Activated naive CD4-positive, alpha-beta T cell treated with anti-CD3 and anti-CD28 coated beads for 36 hours (primary cell): ENCODE measurements at regions of chr10 and their contacts with region 1.

Region 1: GRCh38 chr10:79938728-79939406 is 10.0 kb downstream of the SFTPD start:
- DNase-seq: peak; percentile 36
- H3K4me3 Mint-ChIP-seq: no peak overlapping the region
- H3K27ac Mint-ChIP-seq: no peak overlapping the region
- H3K4me1 Mint-ChIP-seq: peaks cover 14% of the 10 kb centered on the region
- H3K27me3 Mint-ChIP-seq: peaks cover 3% of the 10 kb centered on the region

Region 2: DNA sequence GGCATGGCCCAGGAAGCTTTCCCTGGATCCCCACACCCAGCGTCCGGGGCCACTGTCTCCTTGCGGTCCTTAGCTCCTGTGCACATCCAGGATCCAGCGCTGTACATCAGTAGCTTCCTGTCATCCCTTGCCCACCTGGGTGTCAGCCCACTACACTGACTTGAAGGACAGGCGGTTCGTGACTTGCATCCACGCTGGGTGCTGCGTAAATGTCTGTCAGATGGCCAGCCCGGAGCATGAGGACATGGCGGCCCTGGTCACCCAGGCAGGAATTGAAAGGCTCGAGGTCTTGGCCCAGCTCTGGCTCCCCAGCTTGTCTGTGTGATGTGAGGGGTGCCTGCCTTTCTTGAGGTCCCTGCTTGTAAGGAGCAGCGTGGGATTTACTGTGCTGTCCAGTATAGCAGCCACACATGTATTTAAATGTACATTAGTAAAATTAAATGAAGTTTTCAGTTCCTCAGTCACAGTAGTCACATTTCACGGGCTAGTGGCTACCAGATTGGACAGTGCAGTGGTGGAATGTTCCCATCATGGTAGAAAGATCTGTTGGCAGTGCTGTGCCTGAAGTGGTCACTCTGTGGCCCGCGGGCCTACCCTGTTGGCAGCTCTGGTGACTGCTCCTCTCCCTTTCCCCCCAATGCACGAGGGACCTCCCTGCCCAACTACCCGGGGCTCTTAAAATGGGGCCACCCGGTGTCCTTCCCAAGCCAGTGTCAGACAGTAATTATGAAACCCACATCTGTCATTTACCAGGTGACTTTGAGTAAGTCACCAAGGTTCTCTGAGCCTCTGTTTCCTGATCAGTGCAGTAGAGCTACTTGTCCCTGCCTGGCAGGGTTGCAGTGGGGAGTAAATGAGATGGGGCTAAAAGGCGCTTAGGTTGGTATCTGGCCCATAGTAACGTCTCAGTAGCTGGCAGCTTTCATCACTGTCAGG is 689.4 kb before region 1 on chr10:
- CTCF ChIA-PET with region 1: no interaction called
- intact Hi-C with region 1: no loop called
- DNase-seq: peak; percentile 61
- H3K4me3 Mint-ChIP-seq: peak overlapping the region; percentile 37
- H3K27ac Mint-ChIP-seq: peak overlapping the region; percentile 73
- H3K4me1 Mint-ChIP-seq: peaks cover 50% of the 10 kb centered on the region
- H3K27me3 Mint-ChIP-seq: no peaks in the 10 kb centered on the region

Region 3: DNA sequence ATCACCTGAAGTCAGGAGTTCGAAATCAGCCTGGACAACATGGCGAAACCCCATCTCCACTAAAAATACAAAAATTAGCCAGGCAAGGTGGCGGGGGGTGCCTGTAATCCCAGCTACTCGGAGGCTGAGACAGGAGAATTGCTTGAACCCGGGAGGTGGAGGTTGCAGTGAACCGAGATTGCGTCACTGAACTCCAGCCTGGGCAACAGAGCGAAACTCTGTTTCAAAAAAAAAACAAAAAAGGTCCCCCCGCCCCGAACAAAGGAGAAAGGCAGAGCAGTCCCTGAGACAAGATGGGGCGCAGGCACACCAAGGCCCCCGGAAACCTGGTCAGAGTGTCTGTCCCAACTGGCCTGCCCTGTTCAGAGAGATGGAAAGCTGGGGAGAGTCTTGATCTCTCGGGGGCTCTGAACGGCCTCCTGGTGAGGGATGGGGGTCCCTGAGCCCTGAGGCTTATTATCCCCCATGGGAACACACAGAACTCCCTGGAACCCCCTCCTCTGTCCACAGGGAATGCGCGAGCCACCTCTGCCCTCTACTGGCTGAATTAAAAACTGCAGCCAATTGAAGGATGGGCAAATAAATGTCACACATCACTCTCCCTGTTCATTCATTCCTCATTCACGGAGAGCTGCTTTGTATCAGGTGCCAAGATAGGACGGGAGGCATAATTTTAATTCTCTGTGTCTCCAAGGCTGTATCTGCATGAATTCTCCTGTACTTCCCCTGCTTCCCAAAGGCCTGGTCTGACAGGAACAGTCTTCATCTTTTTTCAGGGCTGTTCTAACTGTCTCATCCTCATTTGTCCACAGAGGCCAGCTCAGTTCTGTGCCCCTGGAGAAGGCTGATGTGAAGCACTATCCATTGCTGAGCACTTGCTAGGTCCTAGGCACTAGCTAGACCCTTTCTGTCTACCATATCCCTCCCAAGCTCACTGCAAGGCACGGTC is 321.7 kb after region 1 on chr10:
- CTCF ChIA-PET with region 1: no interaction called
- intact Hi-C with region 1: loop called (anchors 10 kb)
- DNase-seq: peak; percentile 46
- H3K4me3 Mint-ChIP-seq: no peak overlapping the region
- H3K27ac Mint-ChIP-seq: no peak overlapping the region
- H3K4me1 Mint-ChIP-seq: no peaks in the 10 kb centered on the region
- H3K27me3 Mint-ChIP-seq: no peaks in the 10 kb centered on the region

Region 4: GRCh38 chr10:80392276-80392675 is 453.4 kb after region 1 on chr10:
- CTCF ChIA-PET with region 1: no interaction called
- intact Hi-C with region 1: no loop called
- DNase-seq: no peak
- H3K4me3 Mint-ChIP-seq: no peak overlapping the region
- H3K27ac Mint-ChIP-seq: no peak overlapping the region
- H3K4me1 Mint-ChIP-seq: no peaks in the 10 kb centered on the region
- H3K27me3 Mint-ChIP-seq: no peaks in the 10 kb centered on the region